ENCODE measurements at regions of chr1 and their contacts with region 1.

Region 1: GRCh38 chr1:21200767-21201166 is 24.1 kb upstream of the EIF4G3 start:
- DNase-seq: no peak
- H3K4me3 Mint-ChIP-seq: no peak overlapping the region
- H3K27ac Mint-ChIP-seq: no peak overlapping the region
- H3K4me1 Mint-ChIP-seq: no peaks in the 10 kb centered on the region
- H3K27me3 Mint-ChIP-seq: peaks cover 4% of the 10 kb centered on the region

Region 2: GRCh38 chr1:20696397-20697329 is 504.1 kb before region 1 on chr1:
- CTCF ChIA-PET with region 1: interaction called, 19 read pairs
- POLR2A ChIA-PET with region 1: no interaction called
- DNase-seq: peak; percentile 78
- H3K4me3 Mint-ChIP-seq: peak overlapping the region; percentile 84
- H3K27ac Mint-ChIP-seq: peak overlapping the region; percentile 80
- H3K4me1 Mint-ChIP-seq: peaks cover 8% of the 10 kb centered on the region
- H3K27me3 Mint-ChIP-seq: peaks cover 11% of the 10 kb centered on the region

Region 3: GRCh38 chr1:21184276-21184675 is 16.5 kb before region 1 on chr1:
- CTCF ChIA-PET with region 1: interaction called, 22 read pairs
- POLR2A ChIA-PET with region 1: no interaction called
- DNase-seq: no peak
- H3K4me3 Mint-ChIP-seq: no peak overlapping the region
- H3K27ac Mint-ChIP-seq: no peak overlapping the region
- H3K4me1 Mint-ChIP-seq: no peaks in the 10 kb centered on the region
- H3K27me3 Mint-ChIP-seq: peaks cover 11% of the 10 kb centered on the region

Region 4: DNA sequence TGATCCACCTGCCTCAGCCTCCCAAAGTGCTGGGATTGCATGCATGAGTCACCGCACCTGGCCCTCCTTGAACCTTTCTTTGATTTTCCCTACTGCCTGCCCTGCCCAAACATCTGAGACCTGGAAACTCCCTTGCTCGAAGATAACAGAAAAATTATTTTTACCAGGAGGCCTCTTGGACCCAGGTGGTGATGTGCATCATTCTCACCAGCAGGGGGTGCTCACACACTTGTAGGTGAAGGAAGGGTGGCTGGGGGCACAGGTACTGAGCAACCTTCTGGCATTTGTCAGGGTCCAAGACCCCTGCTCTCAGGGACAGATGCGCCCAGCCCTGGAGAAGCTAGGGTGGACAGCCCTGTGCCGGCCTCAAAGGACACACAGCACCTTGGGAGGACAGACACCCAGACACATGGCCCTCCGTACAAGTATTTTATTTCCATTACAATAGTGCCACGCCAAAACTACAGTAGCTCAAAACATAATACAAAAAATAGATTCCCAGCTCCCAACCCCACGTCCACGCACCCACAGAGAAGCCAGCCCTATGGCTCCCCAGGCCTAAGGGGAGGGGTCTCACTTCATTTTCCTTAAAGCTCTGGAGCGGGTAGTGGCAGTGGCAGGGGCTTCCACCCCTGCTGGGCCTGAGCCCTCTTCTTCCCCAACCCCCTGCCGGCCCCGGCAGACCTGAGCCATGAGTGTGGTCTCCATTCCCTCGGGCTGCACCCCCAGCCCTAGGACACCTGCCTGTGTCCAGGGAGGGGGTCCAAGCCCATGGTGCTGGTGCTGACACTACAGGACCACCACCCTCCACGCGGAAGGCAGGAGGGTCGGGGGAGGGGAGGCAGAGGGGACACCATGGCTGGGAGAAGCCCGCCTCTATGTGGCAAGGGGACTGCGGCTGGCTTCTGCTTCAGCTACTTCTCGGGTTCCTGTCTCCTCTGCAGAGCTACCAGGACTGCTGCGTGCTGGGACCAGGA is 16.4 kb after region 1 on chr1:
- CTCF ChIA-PET with region 1: no interaction called
- POLR2A ChIA-PET with region 1: no interaction called
- DNase-seq: peak; percentile 79
- H3K4me3 Mint-ChIP-seq: no peak overlapping the region
- H3K27ac Mint-ChIP-seq: peak overlapping the region; percentile 46
- H3K4me1 Mint-ChIP-seq: no peaks in the 10 kb centered on the region
- H3K27me3 Mint-ChIP-seq: no peaks in the 10 kb centered on the region

Measured in activated CD4-positive, alpha-beta T cell treated with anti-CD3 and anti-CD28 coated beads, Interleukin-2, amount 10 ng/mL, durations not matched to agents 7 days and 5 days (primary cell).